HAP-1 (cell line): ENCODE measurements at regions of chr1 and their contacts with region 1.

Region 1: DNA sequence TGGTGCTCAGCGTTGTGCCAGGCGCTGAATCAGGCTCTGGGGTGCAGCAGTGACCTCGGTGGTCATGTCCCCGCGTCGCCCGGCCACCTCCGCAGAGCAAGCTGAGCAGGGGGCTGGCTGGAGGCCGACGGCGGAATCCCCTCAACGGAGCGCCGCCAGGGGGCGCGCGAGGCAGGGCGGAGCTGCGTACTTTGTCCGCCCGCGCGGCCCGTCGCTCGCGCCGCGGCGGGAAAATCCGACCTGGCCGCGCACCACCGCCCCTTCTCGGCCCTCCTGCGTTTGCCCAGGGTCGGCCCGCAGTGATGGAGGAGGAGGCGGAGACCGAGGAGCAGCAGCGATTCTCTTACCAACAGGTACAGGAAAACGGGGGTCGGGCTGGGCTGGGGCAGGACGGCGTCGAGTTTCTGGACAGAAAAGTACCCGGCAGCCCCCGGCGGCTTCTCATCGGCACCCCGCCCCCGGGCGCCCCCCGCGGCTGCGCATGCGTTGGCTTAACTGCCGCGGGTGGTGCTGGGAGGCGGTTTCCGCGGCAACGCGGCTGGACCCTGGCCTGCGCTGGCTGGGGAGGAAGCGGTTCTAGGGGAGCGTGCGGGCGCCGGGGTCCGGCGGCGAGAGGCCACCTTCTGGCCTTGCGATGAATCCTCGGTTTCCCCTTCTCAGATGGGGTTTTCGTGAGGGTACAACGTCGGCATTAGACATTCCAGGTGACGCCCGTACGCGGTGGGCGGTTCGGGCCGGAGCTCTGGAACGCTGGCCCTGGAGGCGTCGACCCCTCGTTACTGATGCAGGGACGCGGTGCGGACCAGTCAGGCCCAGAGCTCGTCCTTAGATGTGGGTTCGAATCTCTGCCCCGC is at the start of gene CENPS:
- DNase-seq: peak; percentile 70 to 92
- H3K4me3 ChIP-seq: peak within 1 kb of the TSS; percentile 65
- H3K4me1 ChIP-seq: peaks cover 18% of the 10 kb centered on the region
- H3K27me3 ChIP-seq: no peaks in the 10 kb centered on the region

Region 2: DNA sequence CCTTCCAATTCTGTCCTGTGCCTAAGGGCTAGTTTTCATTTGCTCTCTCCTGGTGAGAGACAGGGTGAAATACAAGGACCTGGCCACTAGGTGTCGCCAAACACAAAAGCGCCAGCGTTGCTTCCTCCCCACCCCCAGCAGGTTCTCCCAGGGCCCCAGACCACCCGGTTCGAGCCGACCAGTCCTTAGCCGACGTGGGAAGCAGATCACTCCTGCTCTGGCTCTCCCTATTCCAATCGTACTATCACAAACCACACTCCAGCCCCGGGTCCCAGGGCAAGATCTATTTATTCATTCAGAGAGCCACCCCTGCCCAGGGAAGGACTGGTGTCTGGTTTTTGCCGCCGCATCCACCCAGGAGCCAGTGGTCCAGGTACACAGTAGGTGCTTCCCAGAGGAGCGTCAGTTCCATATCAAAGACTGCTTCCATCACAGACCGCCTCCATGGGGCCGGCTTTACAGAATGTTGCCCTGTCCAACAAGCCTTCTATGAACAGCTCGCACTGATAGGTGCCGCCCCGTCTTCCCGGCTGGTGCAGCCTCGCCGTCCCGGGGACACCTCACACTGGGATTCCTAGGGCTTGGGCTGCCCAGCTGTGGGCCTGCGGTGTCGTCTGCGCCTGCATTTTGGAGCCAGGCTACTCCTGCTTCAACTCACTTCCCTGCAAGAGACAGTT is 555.3 kb before region 1 on chr1:
- in situ Hi-C with region 1: loop called (anchors 10 kb)
- DNase-seq: peak; percentile 73 to 88
- H3K4me3 ChIP-seq: no peak overlapping the region
- H3K4me1 ChIP-seq: no peaks in the 10 kb centered on the region
- H3K27me3 ChIP-seq: no peaks in the 10 kb centered on the region

Region 3: DNA sequence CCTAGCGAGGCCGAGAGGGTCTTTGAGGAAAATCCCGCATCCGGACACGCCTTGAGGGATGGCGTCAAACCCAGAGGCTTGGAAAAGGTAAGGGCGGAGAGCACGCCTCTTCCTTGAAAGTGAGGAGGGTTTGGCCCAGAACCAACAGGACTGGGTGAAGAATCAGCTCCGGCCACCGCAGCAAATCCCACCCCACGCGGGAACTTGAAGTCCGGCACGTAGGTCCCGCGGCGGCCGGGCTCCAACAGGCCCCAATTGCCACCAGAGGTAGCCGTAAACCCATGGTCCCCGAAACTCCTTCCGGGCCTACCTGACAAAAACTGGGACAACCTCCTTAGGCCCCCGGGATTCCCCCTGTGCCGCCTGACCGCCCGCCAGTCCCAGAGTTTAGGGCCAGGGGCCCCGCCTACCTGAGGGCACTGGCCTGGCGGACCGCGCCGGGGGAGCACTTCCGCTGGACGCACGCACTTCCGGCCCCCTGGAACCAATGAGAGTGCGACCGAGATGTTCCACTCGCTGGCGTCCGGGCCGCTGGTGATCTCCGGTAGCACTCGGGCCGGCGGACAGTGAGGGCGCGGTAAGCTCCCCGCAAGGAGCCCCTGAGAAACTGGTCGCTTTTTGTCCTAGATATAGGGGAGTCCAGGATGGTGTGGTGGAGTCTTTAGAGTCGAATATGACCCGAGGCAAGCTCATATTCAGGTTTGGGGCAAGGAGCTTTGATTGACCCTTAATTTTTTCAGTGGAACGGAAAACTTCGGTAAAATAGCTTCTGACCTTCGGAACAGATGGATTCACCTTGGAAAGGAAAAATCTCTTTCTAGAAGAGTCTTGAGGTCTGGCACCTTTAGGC is 487.3 kb before region 1 on chr1 and contains the starts of genes LZIC and NMNAT1:
- in situ Hi-C with region 1: loop called (anchors 10 kb)
- DNase-seq: peak; percentile 83 to 94
- H3K4me3 ChIP-seq: peak within 1 kb of the TSS; percentile 83
- H3K4me1 ChIP-seq: no peaks in the 10 kb centered on the region
- H3K27me3 ChIP-seq: no peaks in the 10 kb centered on the region

Region 4: DNA sequence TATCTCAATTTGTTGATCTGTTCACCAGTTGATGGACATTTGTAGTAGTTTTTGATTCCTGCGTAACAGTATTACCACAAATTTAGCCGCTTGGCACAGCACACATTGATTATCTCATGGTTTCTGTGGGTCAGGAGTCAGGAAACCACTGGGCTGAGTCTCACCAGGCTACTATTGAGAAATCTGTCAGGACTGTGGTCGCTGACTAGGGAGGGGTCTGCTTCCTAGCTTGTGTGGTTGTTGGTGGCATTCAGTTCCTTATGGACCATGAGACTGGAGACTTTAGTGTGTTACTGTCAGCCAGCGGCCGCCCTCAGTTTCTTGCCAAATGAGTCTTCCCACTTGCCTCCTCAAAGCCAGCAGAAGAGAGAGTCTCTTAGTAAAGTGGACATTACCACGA is 54.1 kb after region 1 on chr1:
- in situ Hi-C with region 1: no loop called
- DNase-seq: no peak
- H3K4me3 ChIP-seq: no peak overlapping the region
- H3K4me1 ChIP-seq: peaks cover 3% of the 10 kb centered on the region; the same call in 1 of the 2 replicates
- H3K27me3 ChIP-seq: no peaks in the 10 kb centered on the region

Region 5: DNA sequence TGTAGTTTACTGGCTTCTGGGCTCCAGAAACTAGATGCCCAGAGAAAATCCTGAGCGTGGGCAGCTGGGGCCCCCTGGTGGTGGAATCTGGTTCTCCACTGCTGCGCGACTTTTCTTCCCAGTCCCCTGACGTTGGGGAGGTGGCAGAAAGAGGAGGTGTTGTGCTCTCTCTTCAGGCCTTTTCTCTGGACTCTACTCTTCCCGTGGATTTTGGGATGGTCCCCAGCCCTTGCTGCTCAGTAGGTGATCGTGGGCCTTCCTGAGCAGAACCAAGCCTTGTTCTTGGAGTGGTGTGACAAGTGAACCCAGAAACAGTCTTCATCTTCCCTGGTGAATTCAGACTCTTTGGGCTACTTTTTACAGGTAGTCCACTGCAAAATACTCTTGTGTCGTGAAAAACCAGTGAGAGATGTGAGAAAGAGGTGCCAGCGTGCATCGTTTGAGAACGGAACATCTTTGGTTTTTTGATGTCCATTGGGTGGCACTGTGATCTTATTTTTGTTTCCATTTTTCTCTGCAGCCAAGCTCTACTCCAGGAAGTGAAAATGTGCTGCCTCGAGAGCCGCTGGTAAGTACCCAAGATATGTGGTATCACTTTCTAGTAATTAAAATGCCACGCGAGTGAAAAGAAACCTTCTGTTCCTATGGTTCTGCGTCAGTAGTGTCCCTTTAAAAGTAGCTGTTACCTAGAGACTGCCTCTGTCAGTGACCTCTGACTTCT is 64.5 kb after region 1 on chr1:
- in situ Hi-C with region 1: loop called (anchors 5 kb)
- DNase-seq: peak; percentile 54 to 87
- H3K4me3 ChIP-seq: no peak overlapping the region
- H3K4me1 ChIP-seq: peaks cover 18% of the 10 kb centered on the region
- H3K27me3 ChIP-seq: no peaks in the 10 kb centered on the region

Region 6: GRCh38 chr1:11180342-11180744 is 749.9 kb after region 1 on chr1:
- in situ Hi-C with region 1: no loop called
- DNase-seq: no peak
- H3K4me3 ChIP-seq: no peak overlapping the region
- H3K4me1 ChIP-seq: peaks cover 14% of the 10 kb centered on the region; the same call in 1 of the 2 replicates
- H3K27me3 ChIP-seq: no peaks in the 10 kb centered on the region